HepG2 (cell line): ENCODE measurements at regions of chr9 and their contacts with region 1.

Region 1: DNA sequence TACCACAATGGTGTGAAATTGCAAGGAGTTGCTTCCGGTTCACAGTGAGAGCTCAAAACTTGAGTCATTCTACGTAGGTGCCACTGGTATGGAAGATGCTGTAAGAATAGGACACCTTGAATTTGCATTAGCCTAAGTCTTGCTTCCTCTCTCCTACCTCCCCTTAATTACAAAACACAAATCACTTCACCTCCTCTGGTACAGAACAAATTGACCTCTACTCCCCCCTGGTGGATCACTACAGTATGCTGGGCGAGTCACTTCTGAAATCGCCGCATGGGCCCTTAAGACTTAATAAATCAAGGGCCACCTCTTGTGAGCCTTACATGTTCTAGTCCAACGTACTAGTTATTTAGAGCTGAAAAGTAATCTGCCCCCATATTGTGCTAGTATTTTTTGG is 145.3 kb upstream of the SMARCA2 start:
- DNase-seq: peak; percentile 18
- ATAC-seq: peak; percentile 89
- H3K4me3 ChIP-seq: no peak overlapping the region
- H3K27ac ChIP-seq: no peak overlapping the region
- H3K4me1 ChIP-seq: no peaks in the 10 kb centered on the region
- H3K27me3 ChIP-seq: peaks cover 0 to 2% of the 10 kb centered on the region in 2 experiments; a peak in 1 of 5 replicates
- CTCF ChIP-seq: peak; percentile 56
- EP300 ChIP-seq: no peak
- POLR2A ChIP-seq: no peak
- RAD21 ChIP-seq: 0 out of 2 replicates have a peak, but pooled peaks have one; percentile 28

Region 2: DNA sequence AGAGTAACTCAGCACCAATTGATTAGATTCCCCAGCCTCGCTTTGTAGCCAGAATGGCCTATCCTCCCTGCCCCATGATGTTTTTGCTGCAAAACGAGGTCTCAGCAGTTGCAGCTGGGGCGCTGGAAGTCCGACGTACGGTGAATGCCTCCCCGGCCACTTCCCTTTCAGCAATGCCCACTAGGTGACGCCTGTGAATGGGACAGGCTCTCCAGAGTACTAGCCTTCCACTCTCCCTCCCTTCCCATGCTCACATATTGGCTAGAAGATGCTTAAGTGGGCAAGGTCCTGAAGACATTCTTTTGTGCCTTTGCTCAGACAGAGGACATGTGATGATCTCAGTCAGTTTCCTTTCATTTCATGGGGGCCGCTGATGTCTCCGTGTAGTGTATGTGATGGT is 768.9 kb before region 1 on chr9:
- CTCF ChIA-PET with region 1: no interaction called
- POLR2A ChIA-PET with region 1: no interaction called
- in situ Hi-C with region 1: no loop called
- intact Hi-C with region 1: loop called (anchors 2 kb)
- DNase-seq: peak; percentile 26
- ATAC-seq: peak; percentile 98
- H3K4me3 ChIP-seq: no peak overlapping the region
- H3K27ac ChIP-seq: no peak overlapping the region
- H3K4me1 ChIP-seq: no peaks in the 10 kb centered on the region
- H3K27me3 ChIP-seq: no peaks in the 10 kb centered on the region; a peak in 1 of 5 replicates
- CTCF ChIP-seq: peak; percentile 85
- EP300 ChIP-seq: no peak
- POLR2A ChIP-seq: no peak
- RAD21 ChIP-seq: peak; percentile 65; the same call in 1 of the 2 replicates

Region 3: DNA sequence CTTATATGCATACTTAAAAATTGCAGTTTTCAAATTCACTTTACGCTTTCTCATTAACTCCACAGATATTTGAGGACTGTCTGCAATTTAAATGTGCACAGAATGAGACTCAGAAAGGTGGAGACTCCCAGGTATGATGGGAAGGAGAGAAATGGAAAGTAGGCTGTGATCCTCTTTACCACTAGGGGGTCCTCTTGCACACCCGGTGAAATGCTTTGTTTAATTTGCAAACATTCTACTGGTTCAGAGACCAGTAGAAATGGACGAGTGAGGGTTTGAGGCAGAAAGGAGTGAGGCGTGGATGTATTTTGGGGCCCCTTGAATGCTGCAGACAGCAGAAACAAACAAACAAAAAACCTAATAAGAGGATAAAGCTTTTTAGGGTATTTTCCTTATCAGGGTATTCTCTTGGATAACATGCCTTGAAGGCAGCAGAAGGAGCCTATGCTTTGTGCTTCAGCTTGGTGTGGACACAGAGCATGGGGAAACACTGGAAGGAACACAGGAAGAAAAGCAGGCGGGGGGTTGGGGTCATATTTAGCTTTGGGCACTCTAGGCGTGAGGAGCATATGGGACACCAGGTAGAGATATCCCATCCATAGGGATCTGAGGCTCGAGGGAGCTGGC is 409.6 kb before region 1 on chr9:
- CTCF ChIA-PET with region 1: no interaction called
- POLR2A ChIA-PET with region 1: no interaction called
- in situ Hi-C with region 1: no loop called
- intact Hi-C with region 1: loop called (anchors 1 kb)
- DNase-seq: peak; percentile 53
- ATAC-seq: peak; percentile 97
- H3K4me3 ChIP-seq: no peak overlapping the region
- H3K27ac ChIP-seq: no peak overlapping the region
- H3K4me1 ChIP-seq: peaks cover 6% of the 10 kb centered on the region; the same call in 1 of the 2 replicates
- H3K27me3 ChIP-seq: no peaks in the 10 kb centered on the region
- CTCF ChIP-seq: peak; percentile 87
- EP300 ChIP-seq: no peak
- POLR2A ChIP-seq: no peak
- RAD21 ChIP-seq: peak; percentile 53; the same call in 1 of the 2 replicates